Activated B cell treated with CpG ODN at 0.5 μM for 24 hours (primary cell): ENCODE measurements at regions of chr18 and their contacts with region 1.

Region 1: GRCh38 chr18:46660955-46661749 is 4.1 kb upstream of the LOXHD1 start:
- DNase-seq: no peak
- ATAC-seq: no peak
- H3K4me3 Mint-ChIP-seq: no peak overlapping the region
- H3K27ac Mint-ChIP-seq: no peak overlapping the region
- H3K4me1 Mint-ChIP-seq: no peaks in the 10 kb centered on the region
- H3K27me3 Mint-ChIP-seq: peaks cover 3% of the 10 kb centered on the region
- CTCF ChIP-seq: no peak

Region 2: DNA sequence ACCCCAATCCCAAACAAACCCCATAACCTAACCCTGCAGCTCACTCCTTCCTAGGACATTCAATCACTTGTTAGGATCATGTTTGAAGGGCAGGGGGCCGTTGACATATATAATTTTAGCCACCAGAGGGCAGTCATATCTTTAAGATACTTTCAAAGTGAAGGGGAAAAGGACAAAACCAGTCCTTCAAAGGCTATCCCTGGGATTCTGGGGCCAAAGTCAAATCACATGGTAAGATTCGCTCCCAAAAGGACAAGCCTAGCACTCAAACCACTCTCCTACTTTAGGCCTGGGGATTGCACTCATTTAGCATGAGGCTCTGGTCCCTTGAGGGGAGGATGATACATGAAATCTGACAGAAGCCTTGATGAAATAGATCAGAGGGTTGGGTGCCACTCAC is 512.3 kb before region 1 on chr18:
- CTCF ChIA-PET with region 1: interaction called, 126 read pairs
- POLR2A ChIA-PET with region 1: no interaction called
- intact Hi-C with region 1: loop called (anchors 1 kb)
- DNase-seq: no peak
- ATAC-seq: no peak
- H3K4me3 Mint-ChIP-seq: no peak overlapping the region
- H3K27ac Mint-ChIP-seq: no peak overlapping the region
- H3K4me1 Mint-ChIP-seq: no peaks in the 10 kb centered on the region
- H3K27me3 Mint-ChIP-seq: no peaks in the 10 kb centered on the region
- CTCF ChIP-seq: peak; percentile 59

Region 3: DNA sequence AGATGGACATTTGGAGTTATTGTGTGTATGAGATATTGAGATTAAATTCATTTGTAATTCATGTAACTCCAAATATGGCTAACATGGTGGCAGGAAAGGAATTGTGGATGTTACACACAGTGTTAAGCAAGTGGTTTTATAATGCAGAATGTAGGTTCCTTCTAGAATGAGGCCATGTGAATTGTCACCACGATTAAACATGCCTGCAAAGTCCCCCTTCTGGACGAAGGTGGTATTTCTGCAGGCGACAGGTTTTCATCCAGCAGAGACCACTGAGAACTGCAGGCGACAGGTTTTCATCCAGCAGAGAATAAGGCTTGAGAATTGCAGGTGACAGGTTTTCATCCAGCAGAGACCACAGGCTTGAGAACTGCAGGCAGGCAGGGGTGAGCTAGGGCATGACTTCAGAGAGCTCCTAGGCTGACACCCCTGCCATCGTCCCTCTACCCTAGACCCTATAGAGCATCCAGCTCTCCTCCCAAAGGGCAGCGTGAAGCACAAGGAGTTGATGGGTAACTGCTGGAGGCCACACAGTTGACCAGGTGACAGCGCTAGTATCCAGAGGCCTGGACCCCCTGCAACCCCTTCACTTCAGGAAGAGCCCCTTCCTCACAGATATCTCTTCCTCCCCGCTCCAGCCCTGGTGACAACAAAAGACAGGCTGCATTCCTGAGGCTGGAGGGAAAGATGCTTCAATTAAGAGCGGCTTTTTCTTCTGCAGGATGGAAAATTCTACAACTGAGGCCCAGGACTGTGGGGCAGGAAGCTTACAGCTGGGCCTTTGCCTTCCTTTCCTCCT is 179.9 kb before region 1 on chr18:
- CTCF ChIA-PET with region 1: no interaction called
- POLR2A ChIA-PET with region 1: no interaction called
- intact Hi-C with region 1: loop called (anchors 1 kb)
- DNase-seq: no peak
- ATAC-seq: peak; percentile 45
- H3K4me3 Mint-ChIP-seq: no peak overlapping the region
- H3K27ac Mint-ChIP-seq: no peak overlapping the region
- H3K4me1 Mint-ChIP-seq: no peaks in the 10 kb centered on the region
- H3K27me3 Mint-ChIP-seq: peaks cover 13% of the 10 kb centered on the region
- CTCF ChIP-seq: no peak

Region 4: GRCh38 chr18:46672062-46672970 is 11.2 kb after region 1 on chr18:
- CTCF ChIA-PET with region 1: interaction called, 14 read pairs
- POLR2A ChIA-PET with region 1: no interaction called
- intact Hi-C with region 1: no loop called
- DNase-seq: no peak
- ATAC-seq: no peak
- H3K4me3 Mint-ChIP-seq: no peak overlapping the region
- H3K27ac Mint-ChIP-seq: no peak overlapping the region
- H3K4me1 Mint-ChIP-seq: no peaks in the 10 kb centered on the region
- H3K27me3 Mint-ChIP-seq: peaks cover 5% of the 10 kb centered on the region
- CTCF ChIP-seq: no peak